T-cell (primary cell): ENCODE measurements at regions of chr1 and their contacts with region 1.

Region 1: GRCh38 chr1:200386416-200386815 is 23.4 kb downstream of the ZNF281 start:
- DNase-seq: no peak
- ATAC-seq: no peak
- H3K4me3 ChIP-seq: no peak overlapping the region
- H3K4me3 Mint-ChIP-seq: no peak overlapping the region
- H3K27ac ChIP-seq: no peak overlapping the region
- H3K27ac Mint-ChIP-seq: no peak overlapping the region
- H3K4me1 ChIP-seq: no peaks in the 10 kb centered on the region
- H3K4me1 Mint-ChIP-seq: no peaks in the 10 kb centered on the region
- H3K27me3 ChIP-seq: no peaks in the 10 kb centered on the region
- H3K27me3 Mint-ChIP-seq: no peaks in the 10 kb centered on the region

Region 2: GRCh38 chr1:200099040-200099439 is 287.4 kb before region 1 on chr1:
- CTCF ChIA-PET with region 1: no interaction called
- POLR2A ChIA-PET with region 1: interaction called in 1 of 2 experiments, 18 read pairs
- DNase-seq: no peak
- ATAC-seq: no peak
- H3K4me3 ChIP-seq: no peak overlapping the region
- H3K4me3 Mint-ChIP-seq: no peak overlapping the region
- H3K27ac ChIP-seq: no peak overlapping the region
- H3K27ac Mint-ChIP-seq: no peak overlapping the region
- H3K4me1 ChIP-seq: no peaks in the 10 kb centered on the region
- H3K4me1 Mint-ChIP-seq: no peaks in the 10 kb centered on the region
- H3K27me3 ChIP-seq: peaks cover 0 to 2% of the 10 kb centered on the region in 2 experiments
- H3K27me3 Mint-ChIP-seq: peaks cover 0 to 5% of the 10 kb centered on the region in 2 donors

Region 3: GRCh38 chr1:200802865-200803512 is 416.6 kb after region 1 on chr1:
- CTCF ChIA-PET with region 1: no interaction called
- POLR2A ChIA-PET with region 1: no interaction called
- DNase-seq: peak; percentile 24 to 86 (median 61)
- ATAC-seq: peak; percentile 73 to 80 (median 78)
- H3K4me3 ChIP-seq: no peak overlapping the region
- H3K4me3 Mint-ChIP-seq: no peak overlapping the region
- H3K27ac ChIP-seq: no peak overlapping the region
- H3K27ac Mint-ChIP-seq: no peak overlapping the region
- H3K4me1 ChIP-seq: no peaks in the 10 kb centered on the region
- H3K4me1 Mint-ChIP-seq: peaks cover 2 to 5% (median 4%) of the 10 kb centered on the region in 3 donors
- H3K27me3 ChIP-seq: no peaks in the 10 kb centered on the region
- H3K27me3 Mint-ChIP-seq: no peaks in the 10 kb centered on the region